Uterus (tissue), 4 donors: ENCODE measurements at regions of chr5 and their contacts with region 1.

Region 1: GRCh38 chr5:131589510-131590348 is 45.3 kb downstream of the RAPGEF6 start:
- DNase-seq: no peak
- H3K4me3 ChIP-seq: no peak overlapping the region
- H3K27ac ChIP-seq: no peak overlapping the region
- H3K4me1 ChIP-seq: no peaks in the 10 kb centered on the region
- H3K27me3 ChIP-seq: no peaks in the 10 kb centered on the region
- CTCF ChIP-seq: peak; percentile 81 to 83 (median 82)
- POLR2A ChIP-seq: no peak

Region 2: DNA sequence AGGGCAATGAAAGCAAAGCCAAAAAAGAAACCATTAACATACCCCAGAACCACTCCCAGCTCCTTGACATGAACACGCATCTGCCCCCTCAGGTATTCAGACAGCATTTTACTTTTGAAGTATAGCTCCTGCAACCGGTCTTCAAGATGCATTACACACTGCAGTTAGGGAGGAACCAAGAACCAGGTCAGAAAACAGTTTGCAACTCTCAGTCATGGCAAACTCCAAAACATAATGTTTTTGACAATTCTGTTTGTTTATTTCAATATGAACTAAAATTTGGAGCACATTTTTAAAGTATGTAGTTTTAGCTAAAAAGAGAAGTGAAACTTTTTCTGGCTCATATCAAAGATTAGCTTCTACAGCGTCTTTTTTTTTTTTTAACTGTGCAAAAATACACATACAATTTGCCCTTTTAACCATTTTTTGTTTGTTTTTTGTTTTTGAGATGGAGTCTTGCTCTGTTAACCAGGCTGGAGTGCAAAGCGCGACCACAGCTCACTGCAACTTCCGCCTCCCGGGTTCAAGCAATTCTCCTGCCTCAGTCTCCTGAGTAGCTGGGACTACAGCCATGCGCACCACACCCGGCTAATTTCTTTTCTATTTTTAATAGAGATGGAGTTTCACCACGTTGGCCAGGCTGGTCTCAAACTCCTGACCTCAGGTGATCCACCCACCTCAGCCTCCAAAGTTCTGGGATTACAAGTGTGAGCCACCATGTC is 57.5 kb after region 1 on chr5:
- intact Hi-C with region 1: no loop called
- DNase-seq: no peak
- H3K4me3 ChIP-seq: no peak overlapping the region
- H3K27ac ChIP-seq: no peak overlapping the region
- H3K4me1 ChIP-seq: no peaks in the 10 kb centered on the region
- H3K27me3 ChIP-seq: no peaks in the 10 kb centered on the region
- CTCF ChIP-seq: no peak
- POLR2A ChIP-seq: no peak

Region 3: DNA sequence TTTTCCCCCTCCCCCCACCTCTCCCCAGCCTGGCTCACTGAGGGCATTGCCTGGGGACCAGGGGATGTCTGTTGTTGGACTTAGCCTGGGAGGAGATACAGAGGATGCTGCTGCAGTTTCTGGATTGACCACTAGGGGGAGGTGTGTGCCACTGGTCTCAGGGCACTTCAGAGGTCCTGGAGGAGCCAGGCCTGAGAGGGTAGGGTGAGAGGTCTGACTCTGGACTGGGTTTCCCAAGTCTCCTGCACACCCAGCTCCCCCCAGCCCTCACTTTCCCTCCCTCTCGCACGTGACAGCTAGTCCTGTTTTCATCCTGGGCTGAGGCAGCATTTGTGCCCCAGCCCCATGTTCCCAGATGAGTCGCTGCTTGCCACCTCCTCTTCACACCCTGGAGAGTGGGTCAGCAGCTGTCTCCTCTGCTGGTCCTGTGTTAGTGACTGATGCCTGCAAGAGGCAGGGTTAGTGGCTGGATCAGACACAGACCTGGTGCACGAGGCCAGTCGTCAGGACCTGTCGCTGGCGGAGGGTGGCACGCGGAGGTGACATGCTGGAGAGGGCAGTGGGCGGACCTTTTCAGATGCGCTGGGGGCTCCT is 475.1 kb after region 1 on chr5:
- intact Hi-C with region 1: loop called (anchors 5 kb)
- DNase-seq: peak; percentile 43 to 52
- H3K4me3 ChIP-seq: no peak overlapping the region
- H3K27ac ChIP-seq: no peak overlapping the region
- H3K4me1 ChIP-seq: no peaks in the 10 kb centered on the region
- H3K27me3 ChIP-seq: no peaks in the 10 kb centered on the region
- CTCF ChIP-seq: peak; percentile 54 to 78 (median 58)
- POLR2A ChIP-seq: no peak